Panc1 (cell line): ENCODE measurements at regions of chr3 and their contacts with region 1.

Region 1: GRCh38 chr3:192816351-192816750 is 89.0 kb upstream of the FGF12 start:
- DNase-seq: peak; percentile 53
- ATAC-seq: no peak
- H3K4me3 ChIP-seq: no peak overlapping the region
- H3K27ac ChIP-seq: no peak overlapping the region
- H3K4me1 ChIP-seq: peaks cover 24% of the 10 kb centered on the region
- H3K27me3 ChIP-seq: no peaks in the 10 kb centered on the region
- CTCF ChIP-seq: peak; percentile 79

Region 2: GRCh38 chr3:192887047-192887446 is 70.7 kb after region 1 on chr3:
- CTCF ChIA-PET with region 1: no interaction called
- POLR2A ChIA-PET with region 1: no interaction called
- in situ Hi-C with region 1: no loop called
- intact Hi-C with region 1: loop called (anchors 2 kb)
- DNase-seq: peak; percentile 74
- ATAC-seq: peak; percentile 50; the same call in 1 of the 2 replicates
- H3K4me3 ChIP-seq: peak overlapping the region; percentile 20 to 61
- H3K27ac ChIP-seq: peak overlapping the region; percentile 80
- H3K4me1 ChIP-seq: peaks cover 83% of the 10 kb centered on the region
- H3K27me3 ChIP-seq: no peaks in the 10 kb centered on the region
- CTCF ChIP-seq: no peak

Region 3: DNA sequence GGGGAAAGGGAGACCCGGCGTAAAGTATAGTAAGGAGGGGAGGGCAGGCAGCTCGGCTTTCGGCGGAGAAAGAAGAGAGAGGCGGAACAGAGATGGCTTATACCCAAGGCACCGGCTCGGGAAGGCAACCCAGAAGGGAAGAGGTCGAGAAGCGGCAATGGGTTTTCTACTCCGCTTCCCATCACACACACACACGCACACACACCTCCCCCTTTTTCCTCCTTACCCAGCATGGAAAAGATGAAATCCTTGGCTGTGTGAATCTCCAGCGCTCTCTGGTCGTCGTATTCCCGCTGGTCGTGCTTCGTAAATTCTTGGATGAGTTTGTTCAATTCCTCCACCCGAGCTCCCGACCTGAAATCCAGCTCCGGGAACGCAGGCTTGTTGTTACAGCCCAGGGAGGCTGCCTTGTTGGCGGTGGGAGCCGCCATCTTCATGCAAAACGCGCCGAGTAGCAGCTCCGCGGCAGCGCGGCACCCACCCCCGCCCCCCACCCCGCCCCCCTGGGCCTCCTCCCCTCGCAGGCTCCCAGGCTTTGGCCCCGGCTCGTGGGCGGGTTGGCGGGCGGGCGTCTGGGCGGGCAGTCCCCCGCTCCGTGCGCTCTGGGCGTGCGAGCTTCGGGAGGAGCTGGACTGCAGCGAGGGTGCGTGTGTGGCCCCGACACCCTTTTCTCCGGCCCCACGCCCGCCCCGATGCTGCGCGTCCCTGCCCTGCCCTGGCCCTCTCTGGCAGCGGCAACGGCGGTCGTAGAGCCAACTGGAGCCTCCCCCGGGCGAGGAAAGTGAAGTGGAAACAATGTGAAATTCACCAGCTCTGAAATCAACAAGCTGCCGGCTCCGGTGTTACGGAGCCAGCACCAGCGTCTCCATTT is 101.3 kb after region 1 on chr3 and contains the start of gene MB21D2:
- CTCF ChIA-PET with region 1: interaction called, 15 read pairs
- POLR2A ChIA-PET with region 1: no interaction called
- in situ Hi-C with region 1: no loop called
- intact Hi-C with region 1: loop called (anchors 2 kb)
- DNase-seq: no peak
- ATAC-seq: peak; percentile 96
- H3K4me3 ChIP-seq: peak within 1 kb of the TSS; percentile 75 to 93
- H3K27ac ChIP-seq: peak within 1 kb of the TSS; percentile 86
- H3K4me1 ChIP-seq: peaks cover 22% of the 10 kb centered on the region
- H3K27me3 ChIP-seq: no peaks in the 10 kb centered on the region
- CTCF ChIP-seq: no peak
- total RNA-seq, gene MB21D2: 7.8 TPM

Region 4: GRCh38 chr3:193040836-193041672 is 224.7 kb after region 1 on chr3:
- CTCF ChIA-PET with region 1: interaction called, 25 read pairs
- POLR2A ChIA-PET with region 1: interaction called, 3 read pairs
- in situ Hi-C with region 1: no loop called
- intact Hi-C with region 1: loop called (anchors 1 kb)
- DNase-seq: peak; percentile 13
- ATAC-seq: peak; percentile 77
- H3K4me3 ChIP-seq: no peak overlapping the region
- H3K27ac ChIP-seq: no peak overlapping the region
- H3K4me1 ChIP-seq: no peaks in the 10 kb centered on the region
- H3K27me3 ChIP-seq: no peaks in the 10 kb centered on the region; the same call in 1 of the 2 replicates
- CTCF ChIP-seq: peak; percentile 70; the same call in 1 of the 2 replicates

Region 5: GRCh38 chr3:193190146-193190786 is 373.9 kb after region 1 on chr3:
- CTCF ChIA-PET with region 1: no interaction called
- POLR2A ChIA-PET with region 1: no interaction called
- in situ Hi-C with region 1: no loop called
- intact Hi-C with region 1: loop called (anchors 10 kb)
- DNase-seq: no peak
- ATAC-seq: peak; percentile 65; the same call in 1 of the 2 replicates
- H3K4me3 ChIP-seq: no peak overlapping the region
- H3K27ac ChIP-seq: no peak overlapping the region
- H3K4me1 ChIP-seq: no peaks in the 10 kb centered on the region
- H3K27me3 ChIP-seq: peaks cover 4% of the 10 kb centered on the region; the same call in 1 of the 2 replicates
- CTCF ChIP-seq: peak; percentile 63

Region 6: DNA sequence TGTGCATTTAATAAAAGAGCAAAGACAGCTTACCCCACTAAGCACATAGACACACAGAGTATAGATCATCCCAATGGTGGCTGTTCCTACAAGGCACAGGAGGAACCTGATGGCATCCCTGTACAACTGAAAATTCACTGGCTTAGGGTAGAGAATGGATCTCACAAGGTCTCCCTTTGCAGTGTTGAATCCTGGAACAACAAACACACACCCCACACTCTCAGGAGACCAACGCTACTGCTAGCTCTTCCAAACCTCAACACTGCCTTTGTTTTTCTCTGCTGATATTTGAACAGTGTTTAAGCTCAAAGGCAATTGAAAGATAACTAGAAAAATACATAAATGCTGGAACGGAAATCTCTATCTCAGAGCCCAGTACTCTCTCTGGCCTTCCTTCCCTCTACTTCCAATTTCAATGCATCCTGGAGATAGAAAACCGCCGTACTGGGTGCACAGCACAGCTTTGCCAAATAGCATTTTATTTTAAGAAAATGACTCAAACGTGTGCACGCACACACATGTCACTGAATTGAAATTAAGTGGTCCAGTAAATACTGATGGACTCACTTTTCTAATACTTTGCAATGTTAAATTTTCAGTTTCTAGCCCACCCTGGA is 649.7 kb after region 1 on chr3:
- CTCF ChIA-PET with region 1: interaction called, 5 read pairs
- POLR2A ChIA-PET with region 1: no interaction called
- in situ Hi-C with region 1: no loop called
- intact Hi-C with region 1: loop called (anchors 5 kb)
- DNase-seq: no peak
- ATAC-seq: no peak
- H3K4me3 ChIP-seq: no peak overlapping the region
- H3K27ac ChIP-seq: no peak overlapping the region
- H3K4me1 ChIP-seq: no peaks in the 10 kb centered on the region
- H3K27me3 ChIP-seq: peaks cover 3% of the 10 kb centered on the region; the same call in 1 of the 2 replicates
- CTCF ChIP-seq: no peak

Region 7: GRCh38 chr3:193572426-193572908 is 756.1 kb after region 1 on chr3:
- CTCF ChIA-PET with region 1: interaction called, 5 read pairs
- POLR2A ChIA-PET with region 1: no interaction called
- in situ Hi-C with region 1: no loop called
- intact Hi-C with region 1: loop called (anchors 2 kb)
- DNase-seq: peak; percentile 56
- ATAC-seq: peak; percentile 93
- H3K4me3 ChIP-seq: no peak overlapping the region
- H3K27ac ChIP-seq: no peak overlapping the region
- H3K4me1 ChIP-seq: no peaks in the 10 kb centered on the region
- H3K27me3 ChIP-seq: peaks cover 20% of the 10 kb centered on the region
- CTCF ChIP-seq: peak; percentile 91